MCF 10A (cell line): ENCODE measurements at regions of chr20 and their contacts with region 1.

Region 1: GRCh38 chr20:62186887-62187866 is 4.3 kb downstream of the MTG2 start:
- DNase-seq: no peak
- H3K4me3 Mint-ChIP-seq: peak overlapping the region; percentile 6
- H3K27ac Mint-ChIP-seq: peak overlapping the region; percentile 11
- H3K4me1 Mint-ChIP-seq: peaks cover 21% of the 10 kb centered on the region
- H3K27me3 Mint-ChIP-seq: no peaks in the 10 kb centered on the region
- CTCF ChIP-seq: no peak

Region 2: GRCh38 chr20:62143118-62143973 is 43.8 kb before region 1 on chr20 and contains the starts of genes PSMA7 and SS18L1:
- CTCF ChIA-PET with region 1: interaction called, 4 read pairs
- POLR2A ChIA-PET with region 1: interaction called, 42 read pairs
- intact Hi-C with region 1: no loop called
- DNase-seq: peak; percentile 84
- H3K4me3 Mint-ChIP-seq: peak within 1 kb of the TSS; percentile 84
- H3K27ac Mint-ChIP-seq: peak within 1 kb of the TSS; percentile 97
- H3K4me1 Mint-ChIP-seq: peaks cover 31% of the 10 kb centered on the region
- H3K27me3 Mint-ChIP-seq: no peaks in the 10 kb centered on the region
- CTCF ChIP-seq: no peak
- total RNA-seq, gene PSMA7: 362 and 419 TPM in 2 replicates
- total RNA-seq, gene SS18L1: 16.1 and 17.9 TPM in 2 replicates

Region 3: GRCh38 chr20:62198496-62198895 is 11.3 kb after region 1 on chr20:
- CTCF ChIA-PET with region 1: interaction called, 10 read pairs
- POLR2A ChIA-PET with region 1: interaction called, 5 read pairs
- intact Hi-C with region 1: no loop called
- DNase-seq: no peak
- H3K4me3 Mint-ChIP-seq: no peak overlapping the region
- H3K27ac Mint-ChIP-seq: no peak overlapping the region
- H3K4me1 Mint-ChIP-seq: no peaks in the 10 kb centered on the region
- H3K27me3 Mint-ChIP-seq: no peaks in the 10 kb centered on the region
- CTCF ChIP-seq: no peak

Region 4: DNA sequence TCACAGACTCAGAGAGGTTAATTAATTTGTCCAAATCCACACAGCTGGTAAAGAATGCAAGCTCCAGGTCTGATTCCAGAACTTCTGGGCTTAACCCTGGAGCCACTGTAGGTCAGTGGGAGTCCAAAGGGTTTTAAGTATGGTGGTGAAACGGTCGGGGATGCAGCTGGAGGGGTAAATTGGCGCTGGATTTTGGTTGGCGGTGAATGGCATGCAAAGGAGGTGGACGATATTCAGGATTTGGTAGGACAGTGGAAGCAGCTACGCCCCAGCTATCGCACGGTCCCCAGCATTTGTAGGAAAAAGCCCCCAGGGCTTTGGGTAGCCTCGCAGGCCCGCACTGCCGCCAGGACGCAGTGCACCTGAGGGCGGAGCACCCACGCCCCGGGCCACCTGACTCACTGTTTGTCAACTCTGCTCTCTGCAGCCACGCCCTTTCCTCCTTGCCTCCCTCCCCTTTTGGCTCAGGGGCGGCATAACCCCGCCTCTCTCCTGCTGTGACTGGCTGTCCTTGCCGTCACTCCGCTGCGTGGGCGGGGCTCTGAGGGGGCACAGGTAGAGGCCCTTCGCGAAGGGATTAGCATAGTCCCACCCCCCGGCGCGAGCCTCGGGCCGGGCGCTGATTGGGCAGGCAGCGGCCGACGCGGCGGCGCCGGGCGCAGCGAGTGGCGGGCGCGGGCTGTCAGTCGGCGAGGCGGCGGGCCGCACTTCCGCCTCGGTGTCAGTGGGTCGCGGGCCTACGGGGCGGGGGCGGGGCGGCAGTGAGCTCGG is 50.8 kb after region 1 on chr20 and contains the start of gene OSBPL2:
- CTCF ChIA-PET with region 1: no interaction called
- POLR2A ChIA-PET with region 1: interaction called, 23 read pairs
- intact Hi-C with region 1: no loop called
- DNase-seq: peak; percentile 98
- H3K4me3 Mint-ChIP-seq: peak within 1 kb of the TSS; percentile 76
- H3K27ac Mint-ChIP-seq: peak within 1 kb of the TSS; percentile 61
- H3K4me1 Mint-ChIP-seq: peaks cover 6% of the 10 kb centered on the region
- H3K27me3 Mint-ChIP-seq: no peaks in the 10 kb centered on the region
- CTCF ChIP-seq: no peak
- total RNA-seq, gene OSBPL2: 38.8 and 51.9 TPM in 2 replicates